ENCODE measurements at regions of chr1 and their contacts with region 1.

Region 1: DNA sequence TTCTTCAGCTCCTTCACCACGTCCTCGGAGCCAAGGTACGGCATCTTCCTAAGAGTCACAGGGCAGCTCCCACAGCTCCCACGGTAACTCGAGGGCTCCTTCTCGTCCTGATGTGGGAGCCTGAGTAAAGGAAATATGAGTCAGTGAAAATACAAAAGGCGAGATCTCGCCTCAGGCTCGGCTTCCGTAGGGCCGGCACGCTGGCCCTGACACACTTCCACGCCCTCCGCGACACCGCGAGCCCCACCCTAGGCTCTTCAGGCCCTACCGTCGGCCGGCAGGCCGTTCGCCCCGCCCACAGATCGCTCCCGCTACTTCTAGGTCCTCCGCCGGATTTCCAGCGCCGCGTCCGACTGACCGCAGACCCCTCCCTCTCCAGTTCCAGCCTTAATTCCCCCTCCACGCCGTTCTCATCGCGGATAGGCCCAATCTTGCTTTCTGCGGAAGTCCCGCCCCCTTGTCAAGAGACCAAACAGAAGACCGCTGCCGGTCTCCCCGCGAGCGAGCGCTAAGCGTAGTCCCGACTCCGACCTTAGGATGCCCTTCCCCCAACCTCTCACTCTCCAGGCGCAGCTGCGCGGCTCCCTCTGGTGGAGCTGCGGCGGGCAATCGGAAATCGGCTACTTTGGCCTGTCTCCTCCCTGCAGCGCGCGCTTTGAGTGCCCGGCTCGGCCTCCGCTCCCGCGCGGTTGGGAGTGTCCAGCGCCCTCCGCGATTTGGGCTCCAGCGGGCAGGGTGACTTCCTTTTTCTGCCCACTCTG is at the starts of genes AP4B1 and DCLRE1B:
- DNase-seq: peak; percentile 99
- H3K4me3 ChIP-seq: peak within 1 kb of the TSS; percentile 58
- H3K27ac ChIP-seq: peak within 1 kb of the TSS; percentile 93
- H3K4me1 ChIP-seq: peaks cover 10% of the 10 kb centered on the region
- H3K27me3 ChIP-seq: no peaks in the 10 kb centered on the region
- CTCF ChIP-seq: peak; percentile 42
- total RNA-seq, gene AP4B1: 19.7 to 31.5 TPM
- total RNA-seq, gene DCLRE1B: 5.4 to 9.5 TPM

Region 2: GRCh38 chr1:113835642-113836307 is 69.1 kb before region 1 on chr1:
- intact Hi-C with region 1: loop called (anchors 2 kb)
- DNase-seq: no peak
- H3K4me3 ChIP-seq: no peak overlapping the region
- H3K27ac ChIP-seq: no peak overlapping the region
- H3K4me1 ChIP-seq: no peaks in the 10 kb centered on the region
- H3K27me3 ChIP-seq: no peaks in the 10 kb centered on the region
- CTCF ChIP-seq: peak; percentile 52

Region 3: DNA sequence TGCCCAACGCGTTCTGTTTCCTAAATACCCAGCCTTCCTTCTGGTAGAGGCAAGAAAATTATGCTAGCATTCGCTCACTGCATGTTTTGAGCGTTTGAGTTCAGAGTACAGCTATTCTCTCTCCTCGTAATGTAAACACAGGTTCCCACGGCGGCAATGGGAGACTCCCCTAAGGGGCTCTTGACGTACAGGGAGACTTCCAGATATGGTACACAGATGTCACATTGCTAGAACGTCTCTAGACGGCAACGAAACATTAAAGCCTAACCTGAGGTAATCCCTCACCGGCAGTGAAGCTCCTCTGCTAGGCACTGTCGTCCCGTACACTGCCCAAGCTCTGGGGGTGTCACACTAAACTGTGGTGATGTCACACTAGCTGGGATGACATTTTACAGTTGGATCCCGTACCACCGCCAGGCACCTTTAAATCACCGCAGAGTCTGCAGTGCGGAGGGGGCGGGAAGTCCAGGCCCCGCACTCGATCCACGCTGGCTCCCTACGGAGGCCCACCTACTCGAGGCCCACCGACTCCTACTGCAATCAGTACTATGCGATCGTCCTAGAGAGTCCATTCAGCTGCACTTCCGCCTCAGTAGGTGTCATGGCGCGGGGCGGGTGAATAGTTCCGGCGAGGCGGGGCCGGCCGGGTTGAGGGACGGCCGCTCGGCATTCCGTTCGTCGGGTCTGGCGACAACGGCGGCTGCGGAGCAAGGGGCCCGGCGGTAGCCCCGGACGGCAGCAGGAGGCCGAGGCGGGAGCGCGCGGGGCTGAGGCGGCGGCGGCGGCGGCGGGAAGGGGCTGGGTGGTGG is 24.3 kb after region 1 on chr1 and contains the start of gene HIPK1:
- intact Hi-C with region 1: loop called (anchors 2 kb)
- DNase-seq: peak; percentile 95
- H3K4me3 ChIP-seq: peak within 1 kb of the TSS; percentile 86
- H3K27ac ChIP-seq: peak within 1 kb of the TSS; percentile 96
- H3K4me1 ChIP-seq: peaks cover under 1% of the 10 kb centered on the region
- H3K27me3 ChIP-seq: no peaks in the 10 kb centered on the region
- CTCF ChIP-seq: no peak
- total RNA-seq, gene HIPK1: 61.2 to 91.2 TPM

Region 4: DNA sequence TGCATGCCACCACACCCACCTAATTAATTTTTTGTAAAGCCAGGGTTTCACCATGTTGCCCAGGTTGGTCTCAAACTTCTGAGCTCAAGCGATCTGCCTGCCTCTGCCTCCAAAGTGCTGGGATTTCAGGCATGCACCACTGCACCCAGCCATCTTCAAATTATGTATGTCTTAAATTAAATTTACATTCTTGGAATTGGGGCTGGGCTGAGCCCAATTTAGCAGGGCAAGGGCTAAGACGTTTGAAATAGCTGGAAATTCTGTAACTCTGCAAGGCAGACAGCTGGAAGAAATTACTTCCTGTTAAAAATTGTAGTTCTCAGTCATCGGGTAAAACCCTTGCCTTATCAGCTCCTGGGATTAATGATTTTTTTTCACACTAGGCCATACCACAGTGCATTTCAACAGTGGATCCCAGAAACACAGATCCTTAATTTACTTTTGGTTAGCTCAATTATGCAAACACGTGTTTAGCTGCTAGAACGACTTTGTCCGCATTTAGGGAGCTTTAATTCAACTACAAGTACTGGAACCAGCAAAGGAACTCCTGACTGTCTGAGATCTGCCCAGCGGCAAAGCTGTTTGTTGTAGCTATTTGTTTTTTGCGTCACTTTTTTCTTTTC is 157.7 kb after region 1 on chr1:
- intact Hi-C with region 1: no loop called
- DNase-seq: no peak
- H3K4me3 ChIP-seq: no peak overlapping the region
- H3K27ac ChIP-seq: no peak overlapping the region
- H3K4me1 ChIP-seq: no peaks in the 10 kb centered on the region
- H3K27me3 ChIP-seq: no peaks in the 10 kb centered on the region
- CTCF ChIP-seq: no peak